Adrenal gland (tissue), 19 donors: ENCODE measurements at regions of chr6 and their contacts with region 1.

Region 1: DNA sequence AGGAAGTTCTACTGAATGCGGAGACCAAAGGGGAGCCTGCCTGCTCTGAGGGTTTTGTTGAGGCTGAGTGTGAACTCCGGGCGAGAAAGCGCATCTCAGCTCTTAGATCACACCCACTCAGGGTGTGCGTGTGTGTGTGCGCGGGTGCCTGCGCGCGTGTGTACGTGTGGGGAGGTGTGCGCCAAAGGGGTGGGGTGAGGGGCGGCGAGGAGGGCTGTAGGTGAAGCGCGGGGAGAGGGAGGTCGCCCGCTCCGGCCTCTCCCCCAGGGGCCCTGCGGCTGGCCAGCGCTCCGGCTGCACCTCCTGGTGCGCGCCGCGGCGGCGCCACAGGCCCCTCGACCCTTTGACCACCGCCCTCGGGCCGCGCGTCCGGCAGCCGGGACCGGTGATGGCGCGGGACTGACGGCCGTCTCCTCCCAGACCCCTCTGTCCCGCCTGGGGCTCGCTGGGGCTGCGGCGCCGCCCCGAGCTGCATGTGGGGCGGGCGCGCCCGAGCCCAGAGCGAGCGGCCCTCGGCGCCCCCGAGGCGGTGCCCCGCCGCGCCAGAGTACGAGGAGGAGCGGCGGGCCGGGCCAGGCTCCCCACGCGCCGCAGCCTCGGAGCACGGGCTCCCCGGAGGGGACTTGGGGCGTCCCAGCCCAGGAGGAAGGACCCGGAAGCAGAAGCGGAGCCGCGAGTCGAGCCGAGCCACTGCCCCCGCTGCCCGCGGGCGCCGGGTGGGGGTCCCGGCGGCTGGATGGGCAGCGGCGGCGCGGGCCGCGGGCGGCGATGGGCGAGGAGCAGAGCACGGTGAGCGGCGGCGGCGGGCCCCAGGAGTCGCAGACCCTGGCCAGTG is at the start of gene RNF217:
- DNase-seq: peak; percentile 54 to 83 (median 72)
- H3K4me3 ChIP-seq: peak within 1 kb of the TSS; percentile 42 to 96 (median 61)
- H3K27ac ChIP-seq: peak within 1 kb of the TSS; percentile 69 to 96 (median 92)
- H3K4me1 ChIP-seq: peaks cover 16 to 33% of the 10 kb centered on the region in 2 donors
- H3K27me3 ChIP-seq: no peaks in the 10 kb centered on the region
- CTCF ChIP-seq: peak in 2 of 6 experiments; percentile 14 to 24
- POLR2A ChIP-seq: peak; percentile 7 to 53
- total RNA-seq, gene RNF217: 4.6 to 23.0 (median 15.0) TPM

Region 2: DNA sequence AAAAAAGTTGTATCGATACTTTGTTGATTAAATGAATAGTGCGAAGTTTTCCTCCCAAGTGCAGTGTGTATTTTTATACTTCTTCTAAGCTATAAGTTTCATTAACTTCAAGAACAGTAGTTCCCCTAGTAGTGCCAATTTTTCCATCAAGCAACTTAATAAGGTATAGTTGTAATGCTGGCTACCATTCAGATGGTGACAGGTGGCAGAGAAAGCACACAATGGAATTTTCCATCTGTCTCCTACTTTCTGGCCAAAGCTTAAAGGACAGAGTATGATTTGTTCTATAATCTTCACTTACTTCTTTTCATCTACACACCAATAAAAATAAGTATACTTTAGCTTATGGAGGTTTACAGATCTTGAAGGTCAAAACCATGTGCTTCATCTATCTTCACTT is 727.2 kb before region 1 on chr6:
- intact Hi-C with region 1: no loop called
- DNase-seq: no peak
- H3K4me3 ChIP-seq: no peak overlapping the region
- H3K27ac ChIP-seq: no peak overlapping the region
- H3K4me1 ChIP-seq: no peaks in the 10 kb centered on the region
- H3K27me3 ChIP-seq: no peaks in the 10 kb centered on the region
- CTCF ChIP-seq: no peak
- POLR2A ChIP-seq: no peak

Region 3: GRCh38 chr6:125099211-125100073 is 137.4 kb after region 1 on chr6:
- intact Hi-C with region 1: loop called in 1 of 2 experiments (anchors 10 kb)
- DNase-seq: peak; percentile 62 to 75 (median 67)
- H3K4me3 ChIP-seq: peak overlapping the region in 2 of 4 donors; percentile 27 to 57
- H3K27ac ChIP-seq: no peak overlapping the region
- H3K4me1 ChIP-seq: peaks cover 3 to 6% of the 10 kb centered on the region in 2 donors
- H3K27me3 ChIP-seq: no peaks in the 10 kb centered on the region
- CTCF ChIP-seq: no peak
- POLR2A ChIP-seq: no peak

Region 4: DNA sequence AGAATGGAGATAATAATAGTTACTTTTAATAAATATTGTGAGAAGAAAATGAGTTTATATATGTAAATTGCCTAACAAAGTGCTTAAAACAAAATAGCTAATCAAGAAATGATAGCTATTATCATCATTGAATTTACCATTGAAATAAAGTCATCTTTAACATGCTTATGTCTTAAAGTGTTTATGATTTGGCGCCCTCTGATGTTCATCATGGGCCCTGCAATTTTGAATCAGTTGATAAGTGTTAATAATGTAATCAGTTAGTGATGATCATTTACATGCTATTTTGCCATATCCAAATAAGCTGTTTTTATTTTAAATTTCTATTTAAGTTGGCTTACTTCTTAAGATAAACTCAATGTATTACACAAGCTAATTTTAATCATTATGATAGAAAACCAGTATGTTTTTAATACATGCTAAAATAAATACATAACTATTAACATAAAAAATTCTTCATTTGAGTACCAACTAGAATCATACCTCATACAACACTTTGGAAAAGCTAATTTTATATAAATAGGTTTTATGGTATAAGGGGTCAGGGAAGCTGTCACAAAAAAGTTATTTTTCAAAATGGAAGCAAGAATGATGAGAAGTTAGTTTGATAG is 152.4 kb after region 1 on chr6:
- intact Hi-C with region 1: loop called in 1 of 2 experiments (anchors 10 kb)
- DNase-seq: peak in 6 of 7 donors; percentile 43 to 85 (median 63)
- H3K4me3 ChIP-seq: no peak overlapping the region
- H3K27ac ChIP-seq: no peak overlapping the region
- H3K4me1 ChIP-seq: no peaks in the 10 kb centered on the region
- H3K27me3 ChIP-seq: no peaks in the 10 kb centered on the region
- CTCF ChIP-seq: peak; percentile 74 to 92 (median 83)
- POLR2A ChIP-seq: no peak